ENCODE measurements at regions of chr7 and their contacts with region 1.

Region 1: GRCh38 chr7:50092579-50093491 is at the start of gene ZPBP:
- DNase-seq: peak; percentile 39 to 48 (median 44)
- ATAC-seq: peak; percentile 76
- H3K4me3 ChIP-seq: peak within 1 kb of the TSS; percentile 2 to 81
- H3K27ac ChIP-seq: peak within 1 kb of the TSS in 3 of 4 donors; percentile 10 to 47 (median 35)
- H3K4me1 ChIP-seq: peaks cover 10% of the 10 kb centered on the region
- H3K27me3 ChIP-seq: no peaks in the 10 kb centered on the region
- CTCF ChIP-seq: peak; percentile 54 to 84 (median 75)
- POLR2A ChIP-seq: no peak
- total RNA-seq, gene ZPBP: not detected

Region 2: DNA sequence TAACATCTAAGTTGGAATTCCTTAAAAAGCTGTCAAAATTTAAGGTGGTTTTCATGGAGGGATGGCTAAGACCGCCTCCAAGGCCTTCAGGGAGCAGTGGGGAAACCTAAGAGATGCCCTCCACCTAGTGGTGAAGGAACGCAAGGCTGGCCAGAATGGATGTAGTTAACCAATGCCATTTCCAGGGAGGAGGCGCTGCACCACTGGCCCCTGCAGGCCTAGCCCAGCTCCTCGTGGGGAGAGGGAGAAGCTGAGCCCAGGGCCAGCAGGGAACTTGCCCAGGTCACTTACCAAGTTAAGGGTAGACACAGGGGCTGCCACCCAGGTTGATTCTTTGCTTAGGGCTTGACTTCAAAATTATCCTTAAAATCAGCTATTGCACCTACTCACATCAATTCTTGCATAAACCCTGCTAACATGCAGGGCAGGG is 325.3 kb after region 1 on chr7:
- intact Hi-C with region 1: loop called (anchors 10 kb)
- DNase-seq: peak; percentile 63 to 82 (median 73)
- ATAC-seq: peak; percentile 75
- H3K4me3 ChIP-seq: no peak overlapping the region
- H3K27ac ChIP-seq: no peak overlapping the region
- H3K4me1 ChIP-seq: no peaks in the 10 kb centered on the region
- H3K27me3 ChIP-seq: no peaks in the 10 kb centered on the region
- CTCF ChIP-seq: peak; percentile 44 to 82 (median 74)
- POLR2A ChIP-seq: no peak

Region 3: DNA sequence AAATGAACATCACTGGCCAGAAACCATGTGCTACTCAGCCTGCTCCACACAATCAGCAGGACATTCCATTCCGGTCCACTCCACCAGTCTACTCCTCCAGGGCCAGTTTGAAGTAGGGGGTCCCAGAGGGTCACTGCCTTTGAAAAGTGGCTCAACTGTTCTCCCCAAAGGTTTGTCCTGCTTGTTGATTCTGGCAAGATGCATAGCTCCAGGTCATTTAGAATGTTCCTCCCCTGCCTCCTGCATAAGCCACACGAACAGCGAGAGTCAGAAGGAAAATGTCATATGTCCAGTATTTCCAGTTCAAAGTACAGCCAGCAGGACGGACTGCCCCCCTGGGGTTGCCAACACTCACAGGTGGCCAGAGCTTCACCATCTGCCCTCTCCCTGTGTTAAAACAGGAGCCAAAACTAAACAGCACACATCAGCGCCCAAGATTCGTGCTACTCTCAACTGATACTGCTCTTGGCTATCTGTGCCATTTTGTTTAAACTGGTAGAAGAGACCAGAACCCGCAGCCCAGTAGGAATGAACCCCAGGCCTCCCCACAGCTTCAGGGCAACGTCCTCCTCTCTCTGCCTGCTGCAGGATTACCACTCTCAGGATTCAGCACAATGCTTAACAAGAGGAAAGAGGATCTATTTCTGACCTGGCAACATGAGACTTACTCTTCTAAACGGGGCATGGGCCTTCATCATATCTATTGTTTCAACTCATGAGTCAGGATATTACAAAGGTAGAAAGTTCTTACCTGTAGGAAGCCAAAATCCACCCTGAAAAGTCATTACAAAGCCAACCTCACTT is 678.6 kb after region 1 on chr7:
- intact Hi-C with region 1: no loop called
- DNase-seq: peak; percentile 71 to 86 (median 81)
- ATAC-seq: peak; percentile 86
- H3K4me3 ChIP-seq: no peak overlapping the region
- H3K27ac ChIP-seq: peak overlapping the region; percentile 28 to 73 (median 62)
- H3K4me1 ChIP-seq: peaks cover 82% of the 10 kb centered on the region
- H3K27me3 ChIP-seq: no peaks in the 10 kb centered on the region
- CTCF ChIP-seq: peak in 4 of 7 experiments; percentile 36 to 44 (median 36)
- POLR2A ChIP-seq: no peak